ENCODE measurements at regions of chr5 and their contacts with region 1.

Region 1: DNA sequence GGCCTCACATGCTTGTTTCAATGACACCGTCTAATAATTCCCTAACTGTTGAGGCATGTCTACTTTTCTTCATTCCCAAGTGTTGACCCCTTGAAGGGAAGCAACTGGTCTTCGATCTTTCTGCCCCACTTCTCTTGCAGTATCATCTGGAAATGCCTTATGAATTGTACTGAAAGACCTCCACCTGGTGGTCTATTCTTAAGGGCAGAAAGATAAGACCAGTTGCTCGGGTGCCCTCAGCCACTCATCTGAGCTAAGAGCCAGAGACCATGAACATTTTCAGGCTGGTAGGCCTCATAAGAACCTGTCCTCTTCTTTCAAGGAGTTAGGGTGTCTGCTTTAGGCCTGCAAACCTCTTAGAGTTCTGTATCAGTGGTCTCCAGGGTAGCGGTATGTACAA is 542.5 kb downstream of the CTNND2 start:
- DNase-seq: no peak
- H3K4me3 Mint-ChIP-seq: no peak overlapping the region
- H3K27ac Mint-ChIP-seq: no peak overlapping the region
- H3K4me1 Mint-ChIP-seq: no peaks in the 10 kb centered on the region
- H3K27me3 Mint-ChIP-seq: no peaks in the 10 kb centered on the region
- CTCF ChIP-seq: no peak

Region 2: GRCh38 chr5:10987930-10988504 is 373.8 kb before region 1 on chr5:
- CTCF ChIA-PET with region 1: no interaction called
- intact Hi-C with region 1: loop called (anchors 10 kb)
- DNase-seq: peak; percentile 93
- H3K4me3 Mint-ChIP-seq: peak overlapping the region; percentile 32
- H3K27ac Mint-ChIP-seq: no peak overlapping the region
- H3K4me1 Mint-ChIP-seq: peaks cover 13% of the 10 kb centered on the region
- H3K27me3 Mint-ChIP-seq: no peaks in the 10 kb centered on the region
- CTCF ChIP-seq: peak; percentile 79

Region 3: GRCh38 chr5:11182441-11183268 is 179.1 kb before region 1 on chr5:
- CTCF ChIA-PET with region 1: no interaction called
- intact Hi-C with region 1: no loop called
- DNase-seq: peak; percentile 56
- H3K4me3 Mint-ChIP-seq: no peak overlapping the region
- H3K27ac Mint-ChIP-seq: no peak overlapping the region
- H3K4me1 Mint-ChIP-seq: no peaks in the 10 kb centered on the region
- H3K27me3 Mint-ChIP-seq: no peaks in the 10 kb centered on the region
- CTCF ChIP-seq: peak; percentile 32

Measured in Calu3 (cell line).